Activated CD4-positive, alpha-beta T cell treated with anti-CD3 and anti-CD28 coated beads for 36 hours (primary cell): ENCODE measurements at regions of chr4 and their contacts with region 1.

Region 1: GRCh38 chr4:185244763-185245162 is 35.4 kb downstream of the SNX25 start:
- DNase-seq: no peak
- ATAC-seq: no peak
- H3K4me3 Mint-ChIP-seq: no peak overlapping the region
- H3K27ac Mint-ChIP-seq: no peak overlapping the region
- H3K4me1 Mint-ChIP-seq: peaks cover 28% of the 10 kb centered on the region
- H3K27me3 Mint-ChIP-seq: no peaks in the 10 kb centered on the region

Region 2: GRCh38 chr4:185209031-185209851 is 35.5 kb before region 1 on chr4 and contains the start of gene SNX25:
- CTCF ChIA-PET with region 1: interaction called, 5 read pairs
- POLR2A ChIA-PET with region 1: no interaction called
- intact Hi-C with region 1: loop called (anchors 2 to 5 kb)
- DNase-seq: peak; percentile 93
- ATAC-seq: peak; percentile 90
- H3K4me3 Mint-ChIP-seq: peak within 1 kb of the TSS; percentile 89
- H3K27ac Mint-ChIP-seq: peak within 1 kb of the TSS; percentile 78
- H3K4me1 Mint-ChIP-seq: peaks cover 35% of the 10 kb centered on the region
- H3K27me3 Mint-ChIP-seq: peaks cover 2% of the 10 kb centered on the region
- total RNA-seq, gene SNX25: 14.8 to 15.0 TPM

Region 3: GRCh38 chr4:185217408-185217975 is 27.3 kb before region 1 on chr4:
- CTCF ChIA-PET with region 1: no interaction called
- POLR2A ChIA-PET with region 1: no interaction called
- intact Hi-C with region 1: loop called (anchors 2 to 5 kb)
- DNase-seq: no peak
- ATAC-seq: no peak
- H3K4me3 Mint-ChIP-seq: no peak overlapping the region
- H3K27ac Mint-ChIP-seq: no peak overlapping the region
- H3K4me1 Mint-ChIP-seq: peaks cover 16% of the 10 kb centered on the region
- H3K27me3 Mint-ChIP-seq: no peaks in the 10 kb centered on the region

Region 4: DNA sequence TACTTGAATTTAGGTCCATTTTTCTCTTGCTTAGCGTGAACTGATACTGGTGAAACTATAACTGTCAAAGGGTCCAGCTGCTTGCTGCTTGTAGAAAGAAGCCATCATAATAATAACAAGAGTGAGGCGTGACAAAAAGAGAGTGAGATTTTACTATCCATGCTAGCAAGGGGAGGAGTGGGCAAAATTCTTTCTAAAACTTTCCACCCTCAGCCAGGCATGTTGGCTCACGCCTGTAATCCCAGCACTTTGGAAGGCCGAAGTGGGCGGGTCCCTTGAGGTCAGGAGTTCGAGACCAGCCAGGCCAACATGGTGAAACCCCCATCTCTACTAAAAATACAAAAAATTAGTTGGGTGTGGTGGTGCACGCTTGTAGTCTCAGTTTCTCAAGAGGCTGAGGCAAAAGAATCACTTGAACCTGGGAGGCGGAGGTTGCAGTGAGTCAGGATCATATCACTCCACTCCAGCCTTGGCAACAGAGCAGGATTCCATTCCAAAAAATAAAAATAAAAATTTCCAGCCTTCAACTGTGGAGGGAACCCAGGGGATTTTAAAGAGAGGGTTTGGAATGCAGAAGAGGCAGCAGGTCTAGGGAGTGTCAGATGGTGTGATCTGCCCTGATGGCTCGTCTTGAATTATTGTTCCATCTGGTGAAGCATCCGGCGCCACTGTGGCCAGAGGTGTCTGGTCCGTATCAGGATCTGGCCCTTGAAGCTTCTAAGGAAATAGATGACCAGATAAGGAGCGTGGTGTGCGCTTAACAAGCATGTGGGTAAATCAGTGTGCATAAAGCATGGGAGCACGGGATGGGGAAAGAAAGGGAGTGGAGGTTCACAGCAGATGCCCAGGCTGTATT is 99.2 kb after region 1 on chr4:
- CTCF ChIA-PET with region 1: no interaction called
- POLR2A ChIA-PET with region 1: no interaction called
- intact Hi-C with region 1: loop called in 1 of 2 experiments (anchors 5 kb)
- DNase-seq: peak; percentile 20
- ATAC-seq: no peak
- H3K4me3 Mint-ChIP-seq: no peak overlapping the region
- H3K27ac Mint-ChIP-seq: peak overlapping the region; percentile 65
- H3K4me1 Mint-ChIP-seq: peaks cover 48% of the 10 kb centered on the region
- H3K27me3 Mint-ChIP-seq: no peaks in the 10 kb centered on the region

Region 5: GRCh38 chr4:185358514-185358913 is 113.8 kb after region 1 on chr4:
- CTCF ChIA-PET with region 1: no interaction called
- POLR2A ChIA-PET with region 1: no interaction called
- intact Hi-C with region 1: no loop called
- DNase-seq: no peak
- ATAC-seq: no peak
- H3K4me3 Mint-ChIP-seq: no peak overlapping the region
- H3K27ac Mint-ChIP-seq: no peak overlapping the region
- H3K4me1 Mint-ChIP-seq: peaks cover 8% of the 10 kb centered on the region
- H3K27me3 Mint-ChIP-seq: no peaks in the 10 kb centered on the region

Region 6: DNA sequence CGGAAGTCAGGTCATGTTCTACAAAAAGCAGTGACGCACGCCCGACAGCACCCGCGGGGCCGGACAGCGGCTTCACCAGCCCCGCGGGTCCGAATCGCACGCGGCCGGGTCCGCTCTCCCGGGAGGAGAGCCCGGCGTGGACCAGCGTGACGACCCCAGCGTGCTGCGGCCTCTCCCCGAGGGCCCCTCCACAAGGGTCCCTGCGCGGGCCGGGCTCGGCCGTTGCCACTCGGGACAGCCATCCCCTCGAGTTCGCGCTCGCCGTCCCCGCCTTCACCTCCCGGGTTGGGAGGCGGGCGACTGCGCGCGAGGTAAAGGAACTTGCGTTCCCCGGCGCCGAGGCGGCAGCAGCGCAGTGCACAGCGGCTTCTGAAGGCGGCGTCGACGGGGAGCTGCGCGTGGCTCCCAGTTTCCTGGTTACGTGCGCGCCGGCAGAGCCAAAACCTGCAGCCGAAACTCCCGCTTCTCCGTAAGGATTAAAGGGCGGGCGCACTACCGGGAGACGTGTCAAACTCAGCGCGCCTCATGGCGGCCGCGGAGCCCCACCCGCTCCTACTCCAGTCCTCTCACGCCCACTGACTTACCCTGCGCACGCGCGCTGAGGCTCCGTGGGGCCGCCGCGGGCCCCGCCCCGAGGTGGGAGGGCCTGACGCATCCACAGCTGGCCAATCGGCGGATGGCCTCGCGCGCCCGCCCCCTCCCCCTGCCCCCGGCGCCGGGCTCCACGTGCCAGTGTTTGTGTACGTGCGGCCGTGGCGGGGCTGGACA is 151.4 kb after region 1 on chr4:
- CTCF ChIA-PET with region 1: no interaction called
- POLR2A ChIA-PET with region 1: no interaction called
- intact Hi-C with region 1: no loop called
- DNase-seq: peak; percentile 98
- ATAC-seq: peak; percentile 85
- H3K4me3 Mint-ChIP-seq: peak overlapping the region; percentile 94
- H3K27ac Mint-ChIP-seq: peak overlapping the region; percentile 97
- H3K4me1 Mint-ChIP-seq: peaks cover 37% of the 10 kb centered on the region
- H3K27me3 Mint-ChIP-seq: no peaks in the 10 kb centered on the region